ENCODE measurements at regions of chr9 and their contacts with region 1.

Region 1: DNA sequence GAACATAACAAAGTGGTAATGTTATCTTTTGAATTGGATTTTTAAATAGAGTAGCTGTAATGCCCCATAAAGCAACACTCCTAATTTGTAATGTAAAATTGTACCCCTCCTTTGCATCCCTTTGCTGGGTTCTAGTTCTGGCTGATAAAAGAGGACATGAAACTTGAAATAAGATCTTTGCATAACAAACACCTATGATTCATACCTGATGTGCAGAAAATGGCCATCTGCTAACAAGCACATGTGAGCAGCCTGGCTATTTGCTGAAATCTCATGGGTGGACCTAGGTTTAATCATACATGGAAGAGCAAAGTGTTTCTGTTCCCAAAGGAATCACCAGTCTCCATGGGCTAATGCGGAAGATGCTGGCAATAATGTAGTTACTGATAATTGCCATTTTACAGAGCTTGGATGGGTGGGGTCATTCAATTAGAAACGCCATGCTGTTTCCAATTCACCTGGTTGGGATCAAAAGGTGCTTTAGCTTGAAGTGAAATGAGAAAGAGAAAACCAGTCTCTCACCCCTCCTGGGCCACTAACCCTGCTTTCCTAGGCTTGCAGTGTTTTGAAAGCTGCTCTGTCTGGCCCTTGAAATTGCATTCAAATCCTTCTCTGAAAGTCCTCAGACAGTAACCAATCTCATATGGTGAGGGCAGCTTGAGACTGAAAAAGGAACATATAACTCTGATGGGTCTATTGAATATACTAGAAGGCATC is 585.1 kb downstream of the TLE4 start:
- DNase-seq: no peak
- H3K4me3 Mint-ChIP-seq: no peak overlapping the region
- H3K27ac Mint-ChIP-seq: no peak overlapping the region
- H3K4me1 Mint-ChIP-seq: no peaks in the 10 kb centered on the region
- H3K27me3 Mint-ChIP-seq: no peaks in the 10 kb centered on the region
- CTCF ChIP-seq: no peak

Region 2: GRCh38 chr9:79583952-79584654 is 572.8 kb before region 1 on chr9:
- CTCF ChIA-PET with region 1: no interaction called
- intact Hi-C with region 1: loop called (anchors 10 kb)
- DNase-seq: no peak
- H3K4me3 Mint-ChIP-seq: no peak overlapping the region
- H3K27ac Mint-ChIP-seq: no peak overlapping the region
- H3K4me1 Mint-ChIP-seq: no peaks in the 10 kb centered on the region
- H3K27me3 Mint-ChIP-seq: no peaks in the 10 kb centered on the region
- CTCF ChIP-seq: no peak

Region 3: GRCh38 chr9:80094176-80094771 is 62.6 kb before region 1 on chr9:
- CTCF ChIA-PET with region 1: no interaction called
- intact Hi-C with region 1: loop called (anchors 10 kb)
- DNase-seq: no peak
- H3K4me3 Mint-ChIP-seq: no peak overlapping the region
- H3K27ac Mint-ChIP-seq: no peak overlapping the region
- H3K4me1 Mint-ChIP-seq: no peaks in the 10 kb centered on the region
- H3K27me3 Mint-ChIP-seq: no peaks in the 10 kb centered on the region
- CTCF ChIP-seq: no peak